ENCODE measurements at regions of chr1 and their contacts with region 1.

Region 1: GRCh38 chr1:230797942-230798418 is 50.8 kb downstream of the CAPN9 start:
- DNase-seq: no peak
- ATAC-seq: peak; percentile 79
- H3K4me3 ChIP-seq: no peak overlapping the region
- H3K27ac ChIP-seq: no peak overlapping the region
- H3K4me1 ChIP-seq: no peaks in the 10 kb centered on the region
- H3K27me3 ChIP-seq: no peaks in the 10 kb centered on the region
- CTCF ChIP-seq: peak; percentile 60

Region 2: GRCh38 chr1:230832476-230832875 is 34.5 kb after region 1 on chr1:
- intact Hi-C with region 1: no loop called
- DNase-seq: no peak
- ATAC-seq: no peak
- H3K4me3 ChIP-seq: no peak overlapping the region
- H3K27ac ChIP-seq: no peak overlapping the region
- H3K4me1 ChIP-seq: peaks cover 5% of the 10 kb centered on the region
- H3K27me3 ChIP-seq: no peaks in the 10 kb centered on the region
- CTCF ChIP-seq: no peak

Region 3: DNA sequence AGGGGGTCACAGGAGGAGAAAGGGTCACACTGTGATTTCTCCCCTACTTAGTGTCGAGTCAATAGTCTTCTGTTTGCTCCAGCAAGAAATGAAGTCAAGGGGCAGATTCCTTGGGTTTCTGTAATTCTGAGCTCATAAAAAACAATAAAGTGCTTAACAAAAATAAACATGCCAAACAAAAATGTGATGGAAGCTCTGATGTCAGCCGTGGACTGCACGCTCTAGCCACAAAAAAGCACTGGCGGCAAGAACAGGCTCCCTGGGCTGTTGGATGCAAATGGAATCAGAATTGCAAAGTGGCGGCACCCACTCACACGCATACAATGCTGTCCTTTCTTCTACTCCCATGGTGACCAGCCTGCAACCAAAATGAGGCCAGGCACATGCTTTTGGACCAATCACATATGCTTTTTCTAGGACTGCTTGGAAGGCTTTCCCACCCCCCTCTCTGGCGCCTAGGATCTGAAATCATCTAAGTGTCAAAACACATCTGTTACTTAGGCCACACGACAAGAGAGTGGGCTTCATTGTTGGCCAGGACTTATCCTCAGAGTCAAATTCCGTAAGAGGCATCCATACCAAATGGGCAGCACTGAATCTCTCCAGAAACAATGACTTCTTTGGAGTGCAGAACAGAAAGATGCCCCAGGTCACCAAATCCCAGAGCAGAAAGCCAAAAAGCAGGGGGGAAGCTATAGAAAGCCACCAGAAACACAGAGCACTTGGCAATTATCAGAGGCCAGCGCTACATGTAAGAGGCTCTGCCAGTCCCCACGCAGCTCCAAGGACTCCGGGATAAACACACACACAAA is 61.1 kb after region 1 on chr1:
- intact Hi-C with region 1: no loop called
- DNase-seq: no peak
- ATAC-seq: no peak
- H3K4me3 ChIP-seq: no peak overlapping the region
- H3K27ac ChIP-seq: peak overlapping the region; percentile 3
- H3K4me1 ChIP-seq: peaks cover 76% of the 10 kb centered on the region
- H3K27me3 ChIP-seq: no peaks in the 10 kb centered on the region
- CTCF ChIP-seq: no peak

Region 4: DNA sequence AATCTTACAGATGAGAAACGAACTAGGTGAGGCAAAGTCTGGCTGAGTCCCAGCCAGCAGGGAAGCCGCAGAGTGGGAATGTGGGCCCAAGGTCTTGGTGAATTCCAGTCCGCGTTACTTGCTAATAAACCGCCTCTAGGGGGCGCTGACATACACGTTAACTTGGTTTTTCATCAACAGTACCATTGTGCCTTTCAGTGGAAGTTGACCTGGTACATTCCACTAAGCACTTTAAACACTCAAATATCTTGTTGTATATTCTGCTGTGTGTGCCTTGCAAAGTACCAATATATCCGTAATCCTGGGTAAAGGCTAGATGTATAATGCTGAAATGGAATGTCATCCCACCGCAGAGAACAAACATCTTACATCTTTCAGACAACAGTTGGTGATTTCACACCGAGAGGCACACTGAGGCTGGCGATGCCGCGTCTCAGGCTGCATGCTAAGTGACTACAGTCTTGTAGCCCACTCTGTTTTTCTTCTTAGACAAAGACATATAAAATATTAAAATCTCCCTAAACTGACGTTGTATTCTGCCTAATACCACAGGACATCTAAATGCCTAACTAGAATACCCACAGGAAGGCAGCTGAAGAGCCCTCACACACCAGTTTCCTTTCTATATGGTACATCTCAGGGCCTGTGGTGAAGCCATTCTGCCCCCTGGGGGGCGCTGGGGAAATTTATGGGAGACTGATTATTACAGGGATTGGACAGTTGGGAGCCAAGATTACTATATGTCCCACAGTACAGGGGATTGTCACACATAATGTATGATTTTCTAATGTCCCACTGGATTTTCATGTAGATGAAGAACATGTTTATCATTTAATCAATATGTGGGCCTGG is 119.5 kb after region 1 on chr1:
- intact Hi-C with region 1: loop called (anchors 5 kb)
- DNase-seq: peak; percentile 74
- ATAC-seq: peak; percentile 93
- H3K4me3 ChIP-seq: no peak overlapping the region
- H3K27ac ChIP-seq: no peak overlapping the region
- H3K4me1 ChIP-seq: no peaks in the 10 kb centered on the region
- H3K27me3 ChIP-seq: no peaks in the 10 kb centered on the region
- CTCF ChIP-seq: peak; percentile 72

Measured in upper lobe of right lung (tissue), 1 donor.